MCF 10A (cell line): ENCODE measurements at regions of chr2 and their contacts with region 1.

Region 1: GRCh38 chr2:237026981-237027711 is 58.5 kb upstream of the COPS8 start:
- DNase-seq: peak; percentile 74
- H3K4me3 Mint-ChIP-seq: no peak overlapping the region
- H3K27ac Mint-ChIP-seq: no peak overlapping the region
- H3K4me1 Mint-ChIP-seq: no peaks in the 10 kb centered on the region
- H3K27me3 Mint-ChIP-seq: no peaks in the 10 kb centered on the region
- CTCF ChIP-seq: peak; percentile 88

Region 2: GRCh38 chr2:236343400-236344161 is 683.6 kb before region 1 on chr2:
- CTCF ChIA-PET with region 1: interaction called, 18 read pairs
- POLR2A ChIA-PET with region 1: no interaction called
- intact Hi-C with region 1: no loop called
- DNase-seq: peak; percentile 73
- H3K4me3 Mint-ChIP-seq: no peak overlapping the region
- H3K27ac Mint-ChIP-seq: no peak overlapping the region
- H3K4me1 Mint-ChIP-seq: no peaks in the 10 kb centered on the region
- H3K27me3 Mint-ChIP-seq: peaks cover 27% of the 10 kb centered on the region
- CTCF ChIP-seq: peak; percentile 74

Region 3: GRCh38 chr2:236352761-236353593 is 674.2 kb before region 1 on chr2:
- CTCF ChIA-PET with region 1: interaction called, 28 read pairs
- POLR2A ChIA-PET with region 1: no interaction called
- intact Hi-C with region 1: loop called (anchors 1 kb)
- DNase-seq: peak; percentile 43
- H3K4me3 Mint-ChIP-seq: no peak overlapping the region
- H3K27ac Mint-ChIP-seq: no peak overlapping the region
- H3K4me1 Mint-ChIP-seq: no peaks in the 10 kb centered on the region
- H3K27me3 Mint-ChIP-seq: peaks cover 46% of the 10 kb centered on the region
- CTCF ChIP-seq: peak; percentile 78

Region 4: DNA sequence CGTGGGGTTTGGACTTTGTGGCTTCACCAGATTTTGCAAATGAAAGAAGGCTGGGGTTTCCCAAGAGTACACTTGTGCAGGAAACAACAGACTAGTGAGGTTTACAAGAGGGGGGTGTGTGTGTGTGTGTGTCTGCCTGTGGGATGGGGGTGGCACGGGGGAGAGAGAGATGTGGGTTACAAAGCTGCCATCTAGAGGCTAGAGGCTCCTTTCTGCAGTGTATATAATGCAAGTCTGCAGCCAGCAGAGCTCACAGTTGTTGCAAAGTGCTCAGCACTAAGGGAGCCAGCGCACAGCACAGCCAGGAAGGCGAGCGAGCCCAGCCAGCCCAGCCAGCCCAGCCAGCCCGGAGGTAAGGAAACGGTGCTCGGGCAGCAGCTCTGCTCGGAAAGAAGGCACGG is 457.6 kb before region 1 on chr2 and contains the start of gene ACKR3:
- CTCF ChIA-PET with region 1: interaction called, 3 read pairs
- POLR2A ChIA-PET with region 1: no interaction called
- intact Hi-C with region 1: loop called (anchors 1 kb)
- DNase-seq: peak; percentile 51
- H3K4me3 Mint-ChIP-seq: peak within 1 kb of the TSS; percentile 36
- H3K27ac Mint-ChIP-seq: no peak within 1 kb of the TSS
- H3K4me1 Mint-ChIP-seq: peaks cover 6% of the 10 kb centered on the region
- H3K27me3 Mint-ChIP-seq: peaks cover 15% of the 10 kb centered on the region
- CTCF ChIP-seq: peak; percentile 20
- total RNA-seq, gene ACKR3: 0.29 and 0.61 TPM in 2 replicates

Region 5: DNA sequence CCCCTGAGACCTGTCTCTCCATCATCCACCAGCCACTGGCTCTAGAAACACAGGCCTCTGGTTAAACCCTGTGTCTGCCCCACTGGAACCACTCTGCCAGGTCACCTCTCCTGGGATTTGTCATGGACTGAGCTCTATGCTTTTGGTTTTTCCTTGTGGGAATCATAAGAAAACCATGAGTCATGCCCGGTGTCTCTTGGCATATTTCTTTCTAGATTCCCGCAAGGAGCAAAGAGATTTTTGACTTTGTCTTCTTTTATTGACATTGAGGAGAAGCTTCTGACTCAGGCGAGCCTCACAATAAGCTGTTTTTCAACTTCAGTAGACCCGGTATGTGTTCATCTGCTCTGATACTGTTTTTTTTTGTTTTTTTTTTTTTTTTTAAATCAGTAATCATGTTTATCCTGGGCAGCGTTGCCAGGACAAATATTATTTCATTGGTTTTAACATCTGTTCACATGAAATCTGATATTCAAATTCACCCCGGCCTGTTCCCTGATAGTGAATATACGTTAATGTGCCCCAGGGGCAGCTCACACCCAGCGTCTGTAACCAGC is 250.4 kb before region 1 on chr2:
- CTCF ChIA-PET with region 1: interaction called, 3 read pairs
- POLR2A ChIA-PET with region 1: no interaction called
- intact Hi-C with region 1: loop called (anchors 2 kb)
- DNase-seq: peak; percentile 89
- H3K4me3 Mint-ChIP-seq: no peak overlapping the region
- H3K27ac Mint-ChIP-seq: peak overlapping the region; percentile 88
- H3K4me1 Mint-ChIP-seq: peaks cover 7% of the 10 kb centered on the region
- H3K27me3 Mint-ChIP-seq: no peaks in the 10 kb centered on the region
- CTCF ChIP-seq: no peak

Region 6: DNA sequence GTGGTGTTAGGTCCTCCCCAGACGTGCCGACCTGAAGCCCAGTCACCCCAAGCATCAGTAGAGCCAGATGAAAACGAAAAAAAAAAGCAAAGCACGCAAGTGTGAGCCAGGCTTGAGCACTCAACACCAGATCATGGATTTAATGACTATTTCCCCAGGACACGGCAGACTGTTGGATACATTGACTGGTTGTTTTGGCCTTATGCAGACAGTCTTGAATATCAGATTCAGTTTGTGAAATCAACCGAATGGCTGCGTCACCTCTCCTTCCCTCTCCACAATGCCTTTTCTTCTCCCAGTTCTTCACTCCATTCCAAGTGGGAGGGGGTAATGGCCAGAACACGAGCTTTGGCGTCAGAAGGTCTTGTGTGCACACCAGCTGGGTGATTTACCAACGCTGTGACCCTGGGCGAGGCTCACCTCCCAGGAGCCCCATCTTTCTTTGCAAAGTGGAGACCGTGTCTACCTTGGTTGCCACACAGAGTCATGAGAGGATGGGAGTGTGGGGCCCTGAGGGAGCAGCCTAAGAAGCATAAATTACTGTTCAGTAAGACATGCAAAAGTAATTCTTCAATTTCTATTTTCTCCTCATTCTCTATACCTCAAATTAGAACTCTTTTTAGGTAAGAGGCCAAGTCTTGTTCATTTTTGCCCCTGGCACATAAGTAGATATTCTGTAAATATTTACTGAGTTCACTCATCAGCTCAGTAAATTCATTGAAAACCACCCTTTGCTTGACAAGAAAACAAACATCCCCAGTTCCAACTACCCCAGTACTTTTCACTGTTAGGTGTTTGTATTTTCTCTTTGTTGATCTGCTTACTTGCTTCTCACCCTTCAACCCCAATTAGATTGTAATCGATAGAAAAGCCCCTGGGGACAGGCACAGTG is 122.5 kb before region 1 on chr2:
- CTCF ChIA-PET with region 1: no interaction called
- POLR2A ChIA-PET with region 1: no interaction called
- intact Hi-C with region 1: no loop called
- DNase-seq: no peak
- H3K4me3 Mint-ChIP-seq: no peak overlapping the region
- H3K27ac Mint-ChIP-seq: no peak overlapping the region
- H3K4me1 Mint-ChIP-seq: no peaks in the 10 kb centered on the region
- H3K27me3 Mint-ChIP-seq: peaks cover 10% of the 10 kb centered on the region
- CTCF ChIP-seq: no peak

Region 7: DNA sequence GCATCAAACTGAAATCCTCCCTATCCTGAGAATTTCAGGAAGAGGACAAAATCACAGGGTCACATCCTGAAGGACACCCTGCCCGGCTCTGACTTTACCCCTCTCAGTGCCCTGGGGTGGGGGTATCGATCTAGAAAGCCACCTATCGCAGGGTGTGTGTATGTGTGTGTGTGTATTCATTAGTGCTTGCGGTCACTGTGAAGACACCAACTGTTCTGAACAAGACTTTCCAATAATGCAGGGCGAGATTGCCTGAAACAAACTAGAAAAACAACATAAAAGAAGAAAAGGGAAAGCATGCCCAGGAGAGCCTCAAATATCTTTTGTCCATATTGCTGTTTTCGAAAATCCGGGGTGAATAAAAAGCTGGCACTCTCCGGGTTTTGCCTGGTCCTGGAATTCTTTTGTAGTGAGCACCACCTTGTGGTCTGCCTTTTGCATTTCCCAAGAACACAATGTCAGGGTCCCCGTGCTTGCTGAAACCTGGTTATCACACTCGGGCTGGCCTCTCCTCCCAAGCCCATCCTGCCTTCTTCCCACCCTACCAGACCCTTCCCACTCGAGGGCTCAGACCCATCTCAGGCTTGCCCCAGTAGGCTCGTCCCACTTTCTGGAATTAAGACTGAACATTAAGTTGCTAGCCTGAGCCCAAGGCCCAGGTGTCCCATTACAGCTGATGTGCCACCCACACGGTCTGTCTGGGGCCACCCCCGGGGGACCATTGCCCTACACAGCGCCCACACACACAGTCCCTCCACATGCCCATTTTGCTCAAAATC is 33.6 kb after region 1 on chr2:
- CTCF ChIA-PET with region 1: interaction called, 10 read pairs
- POLR2A ChIA-PET with region 1: no interaction called
- intact Hi-C with region 1: loop called (anchors 1 kb)
- DNase-seq: peak; percentile 71
- H3K4me3 Mint-ChIP-seq: no peak overlapping the region
- H3K27ac Mint-ChIP-seq: no peak overlapping the region
- H3K4me1 Mint-ChIP-seq: peaks cover 11% of the 10 kb centered on the region
- H3K27me3 Mint-ChIP-seq: no peaks in the 10 kb centered on the region
- CTCF ChIP-seq: peak; percentile 75